ENCODE measurements at regions of chr9 and their contacts with region 1.

Region 1: DNA sequence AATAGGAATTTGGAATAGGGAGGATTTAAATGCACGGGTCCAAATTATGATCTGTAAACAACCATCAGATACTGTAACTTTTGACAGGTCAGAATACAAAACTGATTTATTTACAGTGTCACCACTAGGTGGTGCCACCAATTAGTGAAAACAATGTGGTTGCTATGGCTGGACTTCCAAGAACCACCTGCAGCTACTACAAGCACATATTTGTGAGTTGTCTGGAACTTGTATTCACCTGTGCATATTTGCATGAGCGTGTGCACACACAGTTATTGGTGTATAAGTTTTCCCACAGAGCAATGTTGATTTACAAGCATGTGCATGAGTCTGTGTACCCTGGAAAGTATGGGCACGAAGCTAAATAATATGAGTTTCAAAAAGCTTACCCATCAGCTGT is 3.0 kb upstream of the HRCT1 start:
- DNase-seq: peak; percentile 52
- H3K4me3 Mint-ChIP-seq: no peak overlapping the region
- H3K27ac Mint-ChIP-seq: no peak overlapping the region
- H3K4me1 Mint-ChIP-seq: peaks cover 23% of the 10 kb centered on the region
- H3K27me3 Mint-ChIP-seq: no peaks in the 10 kb centered on the region

Region 2: GRCh38 chr9:35675732-35676392 is 227.2 kb before region 1 on chr9:
- CTCF ChIA-PET with region 1: no interaction called
- intact Hi-C with region 1: no loop called
- DNase-seq: peak; percentile 72
- H3K4me3 Mint-ChIP-seq: peak overlapping the region; percentile 68
- H3K27ac Mint-ChIP-seq: no peak overlapping the region
- H3K4me1 Mint-ChIP-seq: peaks cover 11% of the 10 kb centered on the region
- H3K27me3 Mint-ChIP-seq: peaks cover 7% of the 10 kb centered on the region

Region 3: GRCh38 chr9:35756275-35757225 is 146.5 kb before region 1 on chr9:
- CTCF ChIA-PET with region 1: no interaction called
- intact Hi-C with region 1: no loop called
- DNase-seq: peak; percentile 92
- H3K4me3 Mint-ChIP-seq: peak overlapping the region; percentile 94
- H3K27ac Mint-ChIP-seq: peak overlapping the region; percentile 95
- H3K4me1 Mint-ChIP-seq: peaks cover 33% of the 10 kb centered on the region
- H3K27me3 Mint-ChIP-seq: no peaks in the 10 kb centered on the region

Region 4: DNA sequence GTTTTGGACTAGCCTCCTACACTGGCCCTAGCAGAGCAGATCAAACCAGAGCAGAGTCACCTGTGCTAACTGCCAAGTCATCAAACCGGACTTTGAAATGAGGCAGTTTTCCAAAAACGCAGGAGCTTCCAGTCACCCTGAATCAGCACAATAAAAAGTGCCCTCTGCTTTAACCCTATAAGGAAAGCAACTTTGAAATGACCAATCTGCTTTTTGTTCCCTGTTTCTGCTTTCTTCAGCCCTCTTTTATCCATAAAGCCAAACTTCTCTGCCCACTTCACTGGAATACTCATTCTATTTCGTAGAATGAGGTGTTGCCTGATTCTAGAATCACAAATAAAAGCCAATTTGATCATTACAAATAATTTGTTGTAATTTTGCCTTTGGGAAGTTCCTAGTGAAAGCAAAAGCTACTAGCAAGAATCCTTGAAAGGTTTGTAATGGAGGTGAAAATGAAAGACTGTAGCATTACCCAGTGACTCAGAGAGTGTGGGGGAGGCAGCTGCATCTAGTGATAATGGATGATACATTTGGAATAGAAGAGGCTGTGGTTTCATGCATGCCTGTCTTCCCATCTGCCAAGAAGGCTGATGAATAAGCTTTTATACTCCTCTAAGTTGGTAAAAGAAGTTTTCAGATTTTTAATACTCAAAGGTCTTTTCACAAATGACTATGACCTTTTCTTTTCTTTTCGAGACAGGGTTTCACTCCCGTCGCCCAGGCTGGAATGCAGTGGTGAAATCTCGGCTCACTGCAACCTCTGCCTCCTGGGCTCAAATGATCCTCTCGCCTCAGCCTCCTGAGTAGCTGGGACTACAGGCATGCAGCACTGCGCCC is 21.1 kb after region 1 on chr9:
- CTCF ChIA-PET with region 1: interaction called, 13 read pairs
- intact Hi-C with region 1: no loop called
- DNase-seq: peak; percentile 76
- H3K4me3 Mint-ChIP-seq: no peak overlapping the region
- H3K27ac Mint-ChIP-seq: no peak overlapping the region
- H3K4me1 Mint-ChIP-seq: peaks cover 26% of the 10 kb centered on the region
- H3K27me3 Mint-ChIP-seq: no peaks in the 10 kb centered on the region

Region 5: DNA sequence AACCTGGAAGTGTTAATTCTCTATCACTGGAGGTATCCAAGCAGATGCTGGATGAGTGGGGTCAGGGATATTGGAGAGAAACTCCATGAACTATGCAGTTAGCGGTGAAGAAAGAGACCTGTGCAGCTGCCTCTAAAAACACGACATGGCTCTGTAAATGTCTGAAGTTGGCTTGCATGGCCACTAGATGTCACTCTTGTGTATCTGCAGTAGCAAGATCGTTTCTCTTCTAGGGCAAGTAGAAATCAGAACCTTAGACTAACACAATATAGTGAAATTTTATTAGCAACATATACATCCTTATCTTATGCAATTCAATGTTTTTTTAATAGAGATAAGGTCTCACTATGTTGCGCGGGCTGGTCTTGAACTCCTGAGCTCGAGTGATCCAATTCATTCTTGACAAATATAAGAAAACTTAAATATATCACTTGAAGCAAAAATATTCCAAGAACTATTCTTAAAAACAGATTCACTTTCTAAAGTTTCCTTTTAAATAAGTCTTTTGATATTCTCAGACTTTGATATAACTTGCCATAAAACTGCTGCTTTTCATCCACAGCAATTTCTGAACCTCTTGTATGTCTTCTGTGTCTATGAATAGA is 52.0 kb after region 1 on chr9:
- CTCF ChIA-PET with region 1: interaction called, 14 read pairs
- intact Hi-C with region 1: no loop called
- DNase-seq: peak; percentile 73
- H3K4me3 Mint-ChIP-seq: no peak overlapping the region
- H3K27ac Mint-ChIP-seq: no peak overlapping the region
- H3K4me1 Mint-ChIP-seq: no peaks in the 10 kb centered on the region
- H3K27me3 Mint-ChIP-seq: no peaks in the 10 kb centered on the region

Measured in activated naive CD4-positive, alpha-beta T cell treated with anti-CD3 and anti-CD28 coated beads for 36 hours (primary cell).